Activated CD8-positive, alpha-beta T cell treated with anti-CD3 and anti-CD28 coated beads for 36 hours (primary cell): ENCODE measurements at regions of chr14 and their contacts with region 1.

Region 1: GRCh38 chr14:89040460-89041259 is 216.2 kb downstream of the TTC8 start:
- DNase-seq: peak; percentile 89
- ATAC-seq: peak; percentile 88
- H3K4me3 Mint-ChIP-seq: peak overlapping the region; percentile 64
- H3K27ac Mint-ChIP-seq: no peak overlapping the region
- H3K4me1 Mint-ChIP-seq: peaks cover 10% of the 10 kb centered on the region
- H3K27me3 Mint-ChIP-seq: peaks cover 10% of the 10 kb centered on the region
- CTCF ChIP-seq: peak; percentile 96

Region 2: GRCh38 chr14:89056394-89056793 is 15.7 kb after region 1 on chr14:
- CTCF ChIA-PET with region 1: interaction called, 14 read pairs
- POLR2A ChIA-PET with region 1: no interaction called
- intact Hi-C with region 1: no loop called
- DNase-seq: no peak
- ATAC-seq: no peak
- H3K4me3 Mint-ChIP-seq: no peak overlapping the region
- H3K27ac Mint-ChIP-seq: no peak overlapping the region
- H3K4me1 Mint-ChIP-seq: no peaks in the 10 kb centered on the region
- H3K27me3 Mint-ChIP-seq: no peaks in the 10 kb centered on the region
- CTCF ChIP-seq: no peak

Region 3: DNA sequence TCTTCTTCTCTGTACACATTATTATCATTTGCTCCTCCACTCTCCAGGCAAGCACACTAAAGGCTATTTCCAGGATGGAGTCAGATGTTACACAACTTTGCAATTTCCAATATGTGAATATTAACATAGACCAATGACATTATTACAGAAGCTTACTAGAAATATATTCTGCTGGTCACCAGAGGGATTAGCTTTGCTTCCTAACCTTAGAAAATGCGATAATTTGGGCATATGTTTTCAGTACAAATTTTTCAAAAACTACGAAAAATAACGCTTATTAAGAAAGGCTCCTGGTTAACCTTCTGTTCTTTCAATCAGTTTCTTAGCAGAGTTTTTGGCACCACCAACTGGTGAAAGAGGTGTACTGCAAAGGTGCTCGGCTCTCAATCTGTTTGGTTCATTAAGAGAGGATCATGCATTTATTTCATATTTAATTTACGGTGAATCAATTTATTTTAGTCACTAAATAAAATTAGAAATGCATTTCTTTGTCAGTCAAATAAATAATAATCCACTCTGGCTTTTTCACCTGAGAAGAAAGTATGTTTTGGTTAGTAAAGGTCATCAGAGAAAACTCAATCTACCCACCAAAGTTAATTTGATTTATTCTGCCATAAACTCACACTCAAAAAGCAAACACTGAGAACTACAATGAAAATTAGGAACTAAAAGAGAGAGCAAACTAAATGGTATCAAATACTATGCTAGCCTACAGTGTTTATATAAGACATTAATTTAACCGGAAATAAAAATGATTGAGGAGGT is 874.6 kb after region 1 on chr14:
- CTCF ChIA-PET with region 1: interaction called, 5 read pairs
- POLR2A ChIA-PET with region 1: no interaction called
- intact Hi-C with region 1: loop called (anchors 5 kb)
- DNase-seq: peak; percentile 77
- ATAC-seq: peak; percentile 66
- H3K4me3 Mint-ChIP-seq: no peak overlapping the region
- H3K27ac Mint-ChIP-seq: no peak overlapping the region
- H3K4me1 Mint-ChIP-seq: peaks cover 3% of the 10 kb centered on the region
- H3K27me3 Mint-ChIP-seq: peaks cover 10% of the 10 kb centered on the region
- CTCF ChIP-seq: peak; percentile 98